GM10248 (cell line): ENCODE measurements at regions of chr14 and their contacts with region 1.

Region 1: GRCh38 chr14:33859306-33859705 is 91.6 kb downstream of the EGLN3 start:
- DNase-seq: no peak
- CTCF ChIP-seq: no peak

Region 2: DNA sequence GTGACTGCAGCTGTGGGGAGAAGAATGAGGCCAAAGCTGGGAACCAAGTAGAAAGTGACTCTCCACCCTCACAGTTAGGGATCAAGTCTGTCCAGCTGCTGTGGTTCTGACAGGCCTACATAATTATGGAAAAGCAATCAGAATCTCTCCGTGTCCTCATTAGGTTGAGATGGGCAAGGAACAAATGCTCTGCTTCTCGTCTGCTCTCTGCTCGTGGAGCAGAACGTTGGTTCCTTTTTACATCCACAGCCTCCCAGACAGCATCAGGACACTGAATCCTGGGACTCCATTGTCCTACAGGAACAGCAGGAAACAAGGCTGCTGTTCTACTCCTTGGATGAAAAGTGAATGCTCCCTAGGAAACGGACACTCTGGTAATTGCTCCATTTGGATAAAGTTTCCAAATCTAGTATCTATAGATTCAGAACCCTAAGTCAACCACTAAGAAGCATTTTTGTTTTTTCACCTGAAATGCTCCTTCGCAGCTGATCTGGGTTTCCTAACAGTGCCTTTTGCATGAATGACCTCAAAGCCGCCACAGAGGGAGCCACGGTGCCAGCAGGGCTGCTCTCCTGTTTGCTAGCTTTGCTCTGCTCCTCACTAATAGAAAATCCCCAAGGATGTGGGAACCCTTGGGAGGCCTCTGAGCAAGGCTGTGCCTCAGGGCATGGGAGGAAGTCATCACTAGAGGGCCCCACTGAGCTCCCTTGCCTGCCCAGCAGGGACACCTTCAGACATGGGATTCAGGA is 10.4 kb before region 1 on chr14:
- CTCF ChIA-PET with region 1: interaction called, 19 read pairs
- POLR2A ChIA-PET with region 1: no interaction called
- DNase-seq: peak; percentile 44
- CTCF ChIP-seq: peak; percentile 47